Left lung (tissue), 14 donors: ENCODE measurements at regions of chr3 and their contacts with region 1.

Region 1: DNA sequence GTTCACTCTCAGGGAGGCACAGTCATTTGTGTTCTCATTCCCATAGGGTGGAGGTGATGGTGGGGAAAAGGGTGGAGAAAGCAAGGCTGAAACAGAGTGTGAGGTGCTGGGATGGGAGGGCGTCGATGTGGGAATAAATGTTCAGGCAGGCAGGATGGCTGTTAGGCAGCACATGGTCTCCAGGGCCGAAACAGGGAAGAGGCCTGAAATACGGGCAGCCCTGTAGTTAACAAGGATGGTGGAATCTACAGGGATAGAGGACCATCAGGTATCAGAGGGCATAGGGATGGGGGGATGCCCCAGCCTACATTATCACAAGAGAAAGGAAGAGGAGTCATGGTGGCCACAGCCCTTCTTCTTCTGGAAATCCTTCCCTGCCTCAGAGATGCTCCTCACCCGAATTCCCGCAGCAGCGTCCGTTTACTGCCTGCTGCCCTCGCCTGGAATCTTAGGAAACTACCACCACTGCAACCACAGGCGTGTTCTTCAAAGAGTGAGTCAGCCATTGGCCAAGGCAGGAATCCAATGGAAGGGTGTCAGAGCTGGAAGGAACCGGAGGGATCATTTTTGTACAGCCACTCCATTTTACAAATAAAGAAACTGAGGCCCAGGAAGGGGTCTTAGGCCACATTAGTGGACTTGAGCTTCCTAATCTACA is 49.7 kb upstream of the POMGNT2 start:
- DNase-seq: peak in 2 of 4 donors; percentile 53 to 62
- ATAC-seq: peak; percentile 89
- H3K4me3 ChIP-seq: no peak overlapping the region
- H3K27ac ChIP-seq: no peak overlapping the region
- H3K4me1 ChIP-seq: no peaks in the 10 kb centered on the region
- H3K27me3 ChIP-seq: peaks cover 0 to 4% of the 10 kb centered on the region in 2 donors
- CTCF ChIP-seq: peak; percentile 28 to 46

Region 2: GRCh38 chr3:42898882-42899675 is 256.5 kb before region 1 on chr3:
- intact Hi-C with region 1: no loop called
- DNase-seq: no peak
- ATAC-seq: peak; percentile 65
- H3K4me3 ChIP-seq: no peak overlapping the region
- H3K27ac ChIP-seq: no peak overlapping the region
- H3K4me1 ChIP-seq: no peaks in the 10 kb centered on the region
- H3K27me3 ChIP-seq: no peaks in the 10 kb centered on the region
- CTCF ChIP-seq: no peak

Region 3: DNA sequence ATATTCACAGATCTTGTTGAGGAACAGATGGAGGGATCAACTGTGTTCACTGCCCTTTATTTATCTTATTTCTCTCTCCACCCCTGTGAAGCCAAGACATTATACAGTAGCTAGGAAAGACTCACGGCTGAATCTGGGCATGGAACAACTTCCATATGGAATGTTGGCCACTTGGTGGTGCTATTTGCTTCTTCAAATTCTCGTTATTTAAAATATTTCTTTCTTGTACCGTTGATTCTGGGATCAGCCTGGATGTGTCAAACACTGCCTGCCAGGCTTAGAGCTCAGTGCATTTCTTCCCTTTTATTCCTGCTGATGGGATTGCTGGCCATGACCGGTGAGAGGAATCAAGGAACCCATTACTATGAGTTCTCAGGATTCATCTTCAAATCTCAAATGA is 194.0 kb before region 1 on chr3:
- intact Hi-C with region 1: loop called in 1 of 2 experiments (anchors 5 kb)
- DNase-seq: peak in 2 of 4 donors; percentile 65 to 71
- ATAC-seq: peak; percentile 85
- H3K4me3 ChIP-seq: no peak overlapping the region
- H3K27ac ChIP-seq: no peak overlapping the region
- H3K4me1 ChIP-seq: no peaks in the 10 kb centered on the region
- H3K27me3 ChIP-seq: no peaks in the 10 kb centered on the region
- CTCF ChIP-seq: peak; percentile 58 to 69